HEK293 (cell line): ENCODE measurements at regions of chr20 and their contacts with region 1.

Region 1: DNA sequence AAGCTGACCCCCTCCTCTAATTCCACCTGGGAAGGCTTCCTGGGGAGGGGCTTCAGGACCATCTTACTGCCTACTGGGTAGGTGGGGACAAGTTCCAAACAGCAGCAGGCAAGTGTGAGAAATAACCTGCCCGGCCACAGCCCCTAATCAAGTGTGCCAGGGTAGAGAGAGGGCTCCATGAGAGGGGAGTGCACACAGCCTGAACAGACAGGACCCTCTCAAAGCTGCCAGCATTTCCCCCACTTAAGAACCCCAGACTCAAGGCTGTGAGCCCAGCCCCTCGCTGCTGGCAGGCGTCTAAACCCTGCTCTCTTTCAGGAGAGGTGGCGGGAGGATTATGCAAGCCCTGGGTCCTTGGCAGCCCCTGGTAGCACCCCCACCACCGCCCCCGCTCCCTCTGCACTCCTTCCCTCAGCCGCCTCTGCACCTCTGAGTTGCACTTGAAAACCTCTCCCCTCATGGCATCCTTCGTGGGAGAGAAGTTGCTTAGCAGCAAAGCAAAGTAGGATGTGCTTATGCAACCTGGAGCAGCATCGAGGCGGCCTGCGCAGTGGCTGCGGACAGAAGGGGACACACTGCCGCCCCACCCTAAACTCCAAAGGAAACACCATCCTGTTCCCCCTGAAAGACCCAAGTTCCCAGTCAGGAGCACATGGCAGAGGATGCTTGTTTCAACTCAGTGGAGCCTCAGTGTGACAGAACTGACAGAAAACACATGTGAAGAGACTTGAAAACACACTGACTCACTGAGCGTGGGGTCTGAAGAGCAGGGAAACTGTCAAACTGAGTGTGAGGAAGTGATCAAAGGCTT is 10.5 kb downstream of the DDRGK1 start:
- H3K4me3 ChIP-seq: no peak overlapping the region
- H3K27ac ChIP-seq: no peak overlapping the region
- H3K4me1 ChIP-seq: no peaks in the 10 kb centered on the region
- CTCF ChIP-seq: no peak

Region 2: DNA sequence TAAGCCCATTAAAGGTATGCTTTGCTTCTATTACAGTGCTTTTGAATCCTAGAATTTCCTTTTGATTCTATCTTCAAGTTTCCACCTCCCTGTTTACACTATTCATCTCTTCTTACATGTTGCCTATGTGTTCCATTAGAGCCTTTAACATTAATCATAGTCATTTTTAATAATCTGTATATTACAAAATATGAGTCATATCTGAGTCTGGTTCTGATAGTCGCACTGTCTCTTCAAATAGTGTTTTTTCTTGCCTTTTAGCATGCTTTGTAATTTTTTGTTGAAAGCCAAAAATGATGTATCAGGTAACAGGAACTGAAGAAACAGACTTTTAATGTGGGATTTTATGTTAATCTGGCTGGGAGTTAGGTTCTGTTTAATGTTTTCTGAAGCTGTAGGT is 145.1 kb after region 1 on chr20:
- CTCF ChIA-PET with region 1: no interaction called
- POLR2A ChIA-PET with region 1: interaction called, 10 read pairs
- H3K4me3 ChIP-seq: no peak overlapping the region
- H3K27ac ChIP-seq: no peak overlapping the region
- H3K4me1 ChIP-seq: no peaks in the 10 kb centered on the region
- CTCF ChIP-seq: no peak